ENCODE measurements at regions of chr6 and their contacts with region 1.

Region 1: DNA sequence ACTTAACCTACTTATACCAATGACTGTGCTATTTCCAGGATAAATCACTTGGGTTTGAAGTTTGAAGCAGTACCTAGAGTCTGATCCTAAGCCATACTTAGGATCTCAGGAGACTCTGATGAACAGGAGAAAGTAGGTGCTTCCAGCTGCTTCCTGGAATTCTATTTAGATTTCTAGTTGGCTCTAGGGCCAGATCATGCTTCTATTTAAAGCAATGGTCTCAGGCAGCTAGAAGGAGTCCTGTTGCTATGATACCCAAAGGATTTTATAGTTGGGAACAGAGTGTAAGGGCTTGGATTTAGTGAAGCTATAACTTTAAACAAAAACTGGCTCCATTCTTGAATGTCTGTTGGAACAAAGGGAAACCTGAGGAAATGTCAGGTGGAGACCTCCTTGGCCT is 52.4 kb upstream of the TINAG start:
- DNase-seq: no peak
- ATAC-seq: peak; percentile 65
- H3K4me3 ChIP-seq: no peak overlapping the region
- H3K27ac ChIP-seq: peak overlapping the region in 1 of 2 donors; percentile 86
- H3K4me1 ChIP-seq: peaks cover 3 to 7% of the 10 kb centered on the region in 2 donors
- H3K27me3 ChIP-seq: no peaks in the 10 kb centered on the region

Region 2: GRCh38 chr6:54335871-54336270 is 80.0 kb after region 1 on chr6:
- intact Hi-C with region 1: loop called in 1 of 2 experiments (anchors 10 kb)
- DNase-seq: no peak
- ATAC-seq: peak; percentile 68
- H3K4me3 ChIP-seq: no peak overlapping the region
- H3K27ac ChIP-seq: no peak overlapping the region
- H3K4me1 ChIP-seq: no peaks in the 10 kb centered on the region
- H3K27me3 ChIP-seq: no peaks in the 10 kb centered on the region

Region 3: DNA sequence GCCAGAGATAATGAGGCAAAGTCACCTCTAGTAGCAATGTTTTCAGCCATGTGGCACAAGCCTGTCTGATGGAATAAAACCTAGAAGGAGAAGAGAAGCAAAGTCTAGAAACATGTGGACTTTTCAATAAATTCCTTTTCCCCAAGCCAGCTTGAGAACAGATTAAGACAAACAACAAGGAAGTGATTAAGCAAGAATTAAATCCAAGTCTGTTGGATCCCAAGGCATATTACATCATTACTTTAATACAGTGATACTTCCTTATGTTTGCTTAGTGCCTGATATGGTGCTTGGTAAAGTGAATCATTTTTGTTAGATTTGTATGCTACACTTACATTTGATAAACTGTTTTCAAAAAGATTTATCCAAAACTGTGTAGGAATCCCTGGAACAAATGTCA is 330.4 kb after region 1 on chr6:
- intact Hi-C with region 1: no loop called
- DNase-seq: no peak
- ATAC-seq: peak; percentile 46
- H3K4me3 ChIP-seq: no peak overlapping the region
- H3K27ac ChIP-seq: no peak overlapping the region
- H3K4me1 ChIP-seq: peaks cover 1 to 2% of the 10 kb centered on the region in 2 donors
- H3K27me3 ChIP-seq: no peaks in the 10 kb centered on the region

Measured in aorta (tissue), 5 donors.